ENCODE measurements at regions of chr2 and their contacts with region 1.

Region 1: GRCh38 chr2:43634604-43635306 is 2.3 kb upstream of the PLEKHH2 start:
- DNase-seq: peak; percentile 85
- ATAC-seq: peak; percentile 71
- H3K4me3 ChIP-seq: peak overlapping the region in 1 of 2 experiments; percentile 24; a peak in 2 of 4 replicates
- H3K27ac ChIP-seq: peak overlapping the region; percentile 68
- H3K4me1 ChIP-seq: peaks cover 19% of the 10 kb centered on the region
- H3K27me3 ChIP-seq: no peaks in the 10 kb centered on the region
- CTCF ChIP-seq: no peak

Region 2: DNA sequence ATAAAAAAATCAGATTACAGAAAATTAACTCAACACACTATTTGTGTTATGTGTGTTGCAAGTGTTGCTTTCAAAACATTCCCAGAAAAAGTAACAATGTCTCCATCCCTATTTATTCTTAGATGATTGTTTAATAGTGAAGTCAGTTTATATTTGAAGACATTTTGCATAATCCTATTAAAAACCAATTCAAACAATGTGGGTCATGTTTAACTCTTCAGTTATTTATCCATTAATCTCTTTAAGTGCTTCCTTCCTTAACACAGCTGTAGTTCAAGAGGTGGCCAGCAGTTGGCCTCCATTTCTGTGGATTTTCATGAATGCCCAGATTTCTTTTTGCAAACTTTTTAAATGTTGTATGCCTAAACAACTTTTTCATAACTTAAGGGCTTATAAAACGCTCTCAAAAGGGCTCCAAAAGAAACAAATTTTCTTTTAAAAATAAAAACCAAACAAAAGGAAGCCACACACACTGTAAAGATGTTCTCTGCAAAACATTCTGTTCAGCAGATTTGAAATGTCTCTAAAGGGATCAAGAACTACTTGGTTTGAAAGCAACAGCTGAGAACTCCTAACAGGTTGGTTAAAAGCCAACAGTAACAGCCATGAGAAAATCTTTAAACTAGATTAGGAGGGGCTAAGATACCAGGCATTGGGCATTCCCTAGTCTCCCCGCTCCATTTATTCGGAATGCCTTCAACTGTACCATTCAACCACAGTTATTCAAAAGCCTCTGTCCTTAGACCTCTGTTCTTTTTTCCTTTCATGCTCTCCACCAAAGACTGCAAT is 110.4 kb before region 1 on chr2:
- CTCF ChIA-PET with region 1: no interaction called
- POLR2A ChIA-PET with region 1: no interaction called
- in situ Hi-C with region 1: no loop called
- intact Hi-C with region 1: no loop called
- DNase-seq: no peak
- ATAC-seq: no peak
- H3K4me3 ChIP-seq: no peak overlapping the region
- H3K27ac ChIP-seq: no peak overlapping the region
- H3K4me1 ChIP-seq: no peaks in the 10 kb centered on the region
- H3K27me3 ChIP-seq: no peaks in the 10 kb centered on the region
- CTCF ChIP-seq: peak; percentile 35; the same call in 1 of the 2 replicates

Region 3: DNA sequence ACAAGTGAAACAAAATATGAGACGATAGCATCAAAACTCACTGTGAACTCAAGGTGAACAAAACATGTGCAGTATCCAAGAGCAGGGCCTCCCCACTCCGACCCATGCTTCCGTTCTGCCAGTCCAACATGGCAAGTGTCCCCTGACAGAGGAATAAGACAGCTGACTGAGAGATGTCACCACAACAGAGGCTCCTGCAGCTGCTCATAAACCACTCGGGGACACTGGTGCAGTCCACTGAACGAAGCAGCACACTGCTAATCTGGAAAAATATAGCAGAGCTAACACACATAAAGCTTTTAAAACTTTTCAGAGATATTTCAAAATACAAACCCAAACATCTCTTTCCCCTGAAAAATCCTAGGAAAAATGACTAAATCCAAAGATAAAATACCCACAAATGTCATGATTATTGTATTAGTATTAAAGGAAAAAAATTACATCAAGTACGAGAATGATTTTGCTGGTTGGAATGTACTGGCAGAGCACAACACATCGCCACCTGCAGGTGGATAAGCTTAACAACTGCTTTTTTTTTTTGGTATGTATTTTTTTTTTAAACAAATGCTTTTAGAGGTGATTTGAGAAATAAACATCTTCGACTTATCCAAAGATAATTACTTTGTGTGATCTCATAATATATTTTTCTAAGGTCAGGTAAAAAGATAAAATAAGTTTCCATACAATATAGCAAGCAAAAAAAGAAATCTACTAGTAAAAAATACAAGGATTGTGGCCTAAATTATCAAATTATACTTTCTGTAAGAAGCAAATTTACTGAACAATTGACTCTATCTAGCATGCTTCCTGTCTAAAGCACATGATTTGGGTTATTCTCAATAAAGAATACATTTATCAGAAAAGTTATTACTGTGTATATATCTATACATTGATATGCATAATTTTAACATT is 57.5 kb before region 1 on chr2:
- CTCF ChIA-PET with region 1: interaction called, 10 read pairs
- POLR2A ChIA-PET with region 1: no interaction called
- in situ Hi-C with region 1: no loop called
- intact Hi-C with region 1: no loop called
- DNase-seq: no peak
- ATAC-seq: no peak
- H3K4me3 ChIP-seq: no peak overlapping the region
- H3K27ac ChIP-seq: no peak overlapping the region
- H3K4me1 ChIP-seq: no peaks in the 10 kb centered on the region
- H3K27me3 ChIP-seq: no peaks in the 10 kb centered on the region
- CTCF ChIP-seq: peak; percentile 85